Dendritic cell treated with granulocyte-macrophage colony-stimulating factor and Interleukin-4, amounts not matched to agents 40 ng/mL and 50 ng/mL, for 4 days (primary cell): ENCODE measurements at regions of chr5 and their contacts with region 1.

Region 1: GRCh38 chr5:142145106-142145900 is 36.7 kb downstream of the NDFIP1 start:
- H3K4me3 Mint-ChIP-seq: no peak overlapping the region
- H3K27ac Mint-ChIP-seq: no peak overlapping the region
- H3K4me1 Mint-ChIP-seq: no peaks in the 10 kb centered on the region
- H3K27me3 Mint-ChIP-seq: no peaks in the 10 kb centered on the region

Region 2: GRCh38 chr5:141691867-141692532 is 453.3 kb before region 1 on chr5:
- intact Hi-C with region 1: loop called (anchors 10 kb)
- H3K4me3 Mint-ChIP-seq: peak overlapping the region; percentile 57
- H3K27ac Mint-ChIP-seq: peak overlapping the region; percentile 50
- H3K4me1 Mint-ChIP-seq: peaks cover 34% of the 10 kb centered on the region
- H3K27me3 Mint-ChIP-seq: peaks cover 36% of the 10 kb centered on the region

Region 3: DNA sequence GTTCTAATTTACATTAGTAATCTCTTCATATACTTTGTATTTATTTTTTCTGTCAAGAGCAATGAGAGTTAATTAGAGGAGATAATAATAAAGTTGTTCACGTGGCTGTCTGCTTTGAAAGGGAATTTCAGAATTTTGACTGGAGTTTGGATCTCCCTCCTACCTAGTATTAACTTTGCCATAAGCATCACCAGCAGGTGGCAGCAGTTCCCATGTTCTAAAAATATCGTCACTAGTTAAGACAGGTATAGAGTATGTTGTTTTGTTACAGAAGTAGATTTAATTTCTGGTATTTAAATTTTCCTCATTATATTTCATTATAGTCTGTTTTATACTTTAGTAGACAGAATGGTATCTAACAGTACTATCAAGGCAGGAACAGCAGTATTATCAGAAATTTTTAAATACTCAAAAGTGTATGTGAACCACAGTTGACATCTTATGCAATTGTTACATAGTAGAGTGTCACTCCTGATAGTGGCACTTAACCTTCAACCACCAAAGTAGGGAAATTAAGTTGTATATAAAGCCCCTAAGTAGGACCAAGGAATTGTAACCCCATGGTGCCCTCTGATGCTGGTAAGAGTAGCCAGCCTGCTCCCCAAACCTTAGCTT is 152.8 kb before region 1 on chr5:
- intact Hi-C with region 1: loop called (anchors 1 kb)
- H3K4me3 Mint-ChIP-seq: no peak overlapping the region
- H3K27ac Mint-ChIP-seq: no peak overlapping the region
- H3K4me1 Mint-ChIP-seq: peaks cover 10% of the 10 kb centered on the region
- H3K27me3 Mint-ChIP-seq: no peaks in the 10 kb centered on the region

Region 4: DNA sequence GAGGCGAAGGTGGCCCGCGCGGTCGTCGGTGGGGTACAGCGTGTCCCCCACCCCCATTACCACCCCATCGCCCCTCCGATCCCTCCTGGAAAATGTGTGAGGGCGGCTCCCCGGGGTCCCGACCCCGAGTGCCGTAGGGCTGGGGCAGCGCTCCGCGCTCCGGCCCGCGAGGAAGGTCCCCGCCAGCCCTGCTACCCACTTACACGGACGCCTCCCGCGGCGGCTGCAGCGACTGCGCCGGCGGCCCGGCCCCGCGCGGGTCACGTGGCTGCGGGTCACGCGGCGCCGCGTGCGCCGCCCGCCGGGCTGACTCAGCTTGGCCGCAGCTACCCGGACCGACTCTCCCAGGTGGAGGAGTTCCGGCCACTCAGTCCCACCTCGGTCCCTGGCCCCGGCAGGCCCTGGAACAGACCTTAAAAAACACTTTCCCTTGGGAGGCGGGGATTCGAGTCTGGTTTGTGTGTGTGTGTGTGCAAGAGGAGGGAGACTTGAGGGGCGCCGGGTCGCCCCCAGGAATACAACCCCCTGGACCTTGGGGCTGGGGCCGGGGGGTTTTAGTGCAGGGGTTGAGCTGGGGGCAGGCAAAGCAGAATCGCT is 132.4 kb before region 1 on chr5 and contains the start of gene GNPDA1:
- intact Hi-C with region 1: loop called (anchors 1 kb)
- H3K4me3 Mint-ChIP-seq: peak within 1 kb of the TSS; percentile 81
- H3K27ac Mint-ChIP-seq: peak within 1 kb of the TSS; percentile 94
- H3K4me1 Mint-ChIP-seq: peaks cover 59% of the 10 kb centered on the region
- H3K27me3 Mint-ChIP-seq: no peaks in the 10 kb centered on the region

Region 5: DNA sequence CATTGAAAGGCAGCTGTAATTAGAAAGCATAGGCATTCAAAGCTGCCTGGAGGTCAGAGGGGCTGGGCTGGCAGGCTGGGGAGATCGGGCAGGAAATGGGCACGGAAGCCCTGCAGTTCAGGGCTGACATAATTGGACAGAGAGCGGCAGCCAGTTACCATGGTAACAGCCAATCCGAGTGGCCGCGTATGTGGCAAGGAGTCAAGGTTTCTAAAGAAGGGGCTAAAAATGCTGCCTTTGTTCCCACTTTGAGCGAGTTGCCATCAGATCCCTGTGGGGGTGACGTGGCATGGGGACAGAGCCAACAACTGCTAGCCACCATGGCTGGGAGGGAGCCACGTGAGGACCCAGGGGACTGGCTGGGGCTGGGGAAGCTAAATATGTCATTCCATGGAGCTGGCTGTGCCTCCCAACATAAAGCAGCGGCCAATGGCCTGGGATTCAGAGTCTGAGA is 81.4 kb before region 1 on chr5:
- intact Hi-C with region 1: loop called (anchors 5 kb)
- H3K4me3 Mint-ChIP-seq: no peak overlapping the region
- H3K27ac Mint-ChIP-seq: peak overlapping the region; percentile 35
- H3K4me1 Mint-ChIP-seq: peaks cover 19% of the 10 kb centered on the region
- H3K27me3 Mint-ChIP-seq: peaks cover 16% of the 10 kb centered on the region

Region 6: DNA sequence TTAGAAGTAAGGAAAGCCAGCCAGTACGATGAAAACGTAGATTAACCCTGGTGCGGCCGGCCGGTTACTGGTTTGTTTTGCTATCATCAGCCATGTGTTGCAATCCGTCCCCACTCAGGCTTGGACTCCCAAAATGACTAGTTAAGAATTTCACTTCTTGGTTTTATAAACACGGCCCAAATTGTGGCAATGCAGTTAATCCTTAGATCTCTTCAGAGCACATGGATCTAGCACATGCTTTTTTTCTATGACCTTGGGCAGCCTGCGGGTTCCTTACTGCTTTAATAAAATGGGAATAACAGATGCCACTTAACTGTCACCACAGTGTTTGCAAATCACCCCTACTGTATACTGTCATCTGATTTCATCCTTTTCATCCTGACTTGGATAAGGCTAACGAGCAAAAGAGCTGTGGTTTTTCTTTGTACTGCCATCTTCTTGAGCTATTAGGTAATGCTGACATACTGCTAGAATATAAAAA is 35.2 kb before region 1 on chr5:
- intact Hi-C with region 1: loop called (anchors 5 kb)
- H3K4me3 Mint-ChIP-seq: peak overlapping the region; percentile 95
- H3K27ac Mint-ChIP-seq: peak overlapping the region; percentile 91
- H3K4me1 Mint-ChIP-seq: peaks cover 39% of the 10 kb centered on the region
- H3K27me3 Mint-ChIP-seq: no peaks in the 10 kb centered on the region